ENCODE measurements at regions of chr7 and their contacts with region 1.

Region 1: GRCh38 chr7:50206453-50207250 is 97.9 kb upstream of the IKZF1 start:
- DNase-seq: no peak
- ATAC-seq: no peak
- H3K4me3 ChIP-seq: no peak overlapping the region
- H3K27ac ChIP-seq: no peak overlapping the region
- H3K4me1 ChIP-seq: no peaks in the 10 kb centered on the region
- H3K27me3 ChIP-seq: no peaks in the 10 kb centered on the region
- CTCF ChIP-seq: no peak
- EP300 ChIP-seq: no peak
- POLR2A ChIP-seq: no peak
- RAD21 ChIP-seq: no peak

Region 2: DNA sequence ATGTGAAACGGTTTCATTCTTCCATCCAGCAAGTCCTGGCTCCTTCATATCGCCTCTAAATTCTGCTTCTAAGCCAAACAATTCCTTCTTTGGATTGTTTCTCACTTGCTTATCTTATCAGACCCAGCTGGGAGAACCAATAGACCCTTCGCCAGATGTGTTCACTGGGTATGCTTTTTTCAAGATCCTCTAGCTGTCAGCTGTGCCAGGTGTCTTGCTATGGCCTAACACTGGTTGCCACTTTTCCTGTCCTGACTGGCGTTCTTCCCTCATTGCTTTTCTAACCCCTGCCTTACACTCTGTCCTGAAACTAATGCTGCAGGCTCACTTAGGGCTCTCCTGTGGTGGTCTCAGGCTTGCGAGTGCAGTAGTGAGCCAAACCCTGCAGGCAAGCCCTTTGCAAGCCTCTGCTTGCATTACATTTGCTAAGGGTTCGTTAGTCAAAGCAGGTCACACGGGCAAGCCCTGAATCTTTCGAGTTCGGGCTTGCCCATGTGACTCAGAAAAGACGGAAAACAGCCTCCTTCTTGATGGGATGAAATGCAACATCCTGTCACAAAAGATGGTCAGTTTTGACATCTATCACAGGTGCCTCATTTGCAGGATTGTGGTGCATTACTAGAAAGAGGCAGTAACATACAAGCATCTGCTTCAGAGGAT is 340.4 kb before region 1 on chr7:
- CTCF ChIA-PET with region 1: no interaction called
- POLR2A ChIA-PET with region 1: no interaction called
- RAD21 ChIA-PET with region 1: no interaction called
- SMC1A ChIA-PET with region 1: no interaction called
- in situ Hi-C with region 1: no loop called
- intact Hi-C with region 1: no loop called
- DNase-seq: no peak
- ATAC-seq: no peak
- H3K4me3 ChIP-seq: no peak overlapping the region
- H3K27ac ChIP-seq: no peak overlapping the region
- H3K4me1 ChIP-seq: no peaks in the 10 kb centered on the region
- H3K27me3 ChIP-seq: no peaks in the 10 kb centered on the region; a peak in 1 of 4 replicates
- CTCF ChIP-seq: no peak
- EP300 ChIP-seq: no peak
- POLR2A ChIP-seq: no peak
- RAD21 ChIP-seq: no peak

Region 3: DNA sequence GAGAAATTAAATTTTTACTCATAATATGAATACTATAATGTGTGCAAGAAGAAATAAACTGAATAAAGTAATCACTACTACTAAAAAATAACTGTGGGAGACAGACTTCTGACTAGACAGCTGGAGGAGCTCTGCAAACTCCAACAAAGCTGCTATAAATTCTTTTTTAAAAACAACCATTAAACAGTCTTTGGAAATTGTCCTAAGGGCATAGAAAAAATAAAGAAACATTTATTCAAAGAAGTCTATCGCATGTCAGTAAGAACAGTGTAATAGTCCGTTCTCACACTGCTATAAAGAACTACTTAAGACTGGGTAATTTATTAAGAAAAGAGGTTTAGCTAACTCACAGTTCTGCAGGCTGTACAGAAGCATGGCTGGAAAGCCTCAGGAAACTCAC is 169.6 kb before region 1 on chr7:
- CTCF ChIA-PET with region 1: no interaction called
- POLR2A ChIA-PET with region 1: no interaction called
- RAD21 ChIA-PET with region 1: no interaction called
- SMC1A ChIA-PET with region 1: no interaction called
- in situ Hi-C with region 1: no loop called
- intact Hi-C with region 1: no loop called
- DNase-seq: no peak
- ATAC-seq: no peak
- H3K4me3 ChIP-seq: no peak overlapping the region
- H3K27ac ChIP-seq: no peak overlapping the region
- H3K4me1 ChIP-seq: no peaks in the 10 kb centered on the region
- H3K27me3 ChIP-seq: no peaks in the 10 kb centered on the region
- CTCF ChIP-seq: no peak
- EP300 ChIP-seq: no peak
- POLR2A ChIP-seq: no peak
- RAD21 ChIP-seq: no peak

Region 4: DNA sequence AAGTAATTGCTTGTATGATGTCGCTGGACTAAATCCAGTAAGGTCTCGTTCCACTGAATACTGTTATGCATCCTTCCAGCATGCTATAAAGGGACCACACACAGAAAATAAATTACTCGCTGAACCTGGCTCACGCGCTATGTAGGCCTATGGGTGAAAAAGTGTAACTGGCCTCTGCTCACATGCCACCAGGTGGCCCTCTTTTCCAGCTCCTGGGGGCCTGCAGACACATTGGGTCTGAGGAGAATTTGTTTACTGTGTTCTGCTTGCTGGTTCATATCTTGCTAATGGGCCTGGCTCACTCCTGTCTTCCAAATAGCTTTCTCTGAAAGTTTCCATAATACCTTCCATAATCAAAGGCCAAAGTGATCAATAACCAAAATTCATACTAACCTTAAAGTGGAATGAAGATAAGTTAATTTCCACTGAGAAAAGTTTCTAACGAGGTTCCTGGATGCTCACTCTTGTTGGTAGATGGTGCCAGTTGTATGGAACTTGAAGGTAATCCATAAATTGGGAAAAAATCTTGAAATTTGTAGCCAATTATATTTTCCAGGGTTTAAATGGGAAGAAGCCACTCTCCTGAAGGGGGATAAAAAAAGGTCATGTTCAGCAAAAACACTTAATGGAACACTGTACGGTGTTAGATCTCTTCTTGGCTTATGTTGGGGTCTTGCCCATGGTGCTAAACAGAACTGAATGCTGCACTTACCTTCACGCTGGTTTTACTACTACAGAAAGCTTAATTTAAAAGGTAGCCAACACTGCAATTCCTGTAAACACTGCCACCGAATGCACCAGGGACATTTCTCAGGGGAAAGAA is 86.6 kb before region 1 on chr7:
- CTCF ChIA-PET with region 1: interaction called, 36 read pairs
- POLR2A ChIA-PET with region 1: no interaction called
- RAD21 ChIA-PET with region 1: interaction called, 9 read pairs
- SMC1A ChIA-PET with region 1: interaction called, 23 read pairs
- in situ Hi-C with region 1: no loop called
- intact Hi-C with region 1: no loop called
- DNase-seq: no peak
- ATAC-seq: peak; percentile 98
- H3K4me3 ChIP-seq: no peak overlapping the region
- H3K27ac ChIP-seq: no peak overlapping the region
- H3K4me1 ChIP-seq: peaks cover 4% of the 10 kb centered on the region; the same call in 1 of the 2 replicates
- H3K27me3 ChIP-seq: no peaks in the 10 kb centered on the region
- CTCF ChIP-seq: peak; percentile 68 to 70 (median 69)
- EP300 ChIP-seq: no peak
- POLR2A ChIP-seq: no peak
- RAD21 ChIP-seq: peak; percentile 77

Region 5: GRCh38 chr7:50185951-50186682 is 20.5 kb before region 1 on chr7:
- CTCF ChIA-PET with region 1: interaction called, 14 read pairs
- POLR2A ChIA-PET with region 1: no interaction called
- RAD21 ChIA-PET with region 1: interaction called, 3 read pairs
- SMC1A ChIA-PET with region 1: interaction called, 7 read pairs
- in situ Hi-C with region 1: no loop called
- intact Hi-C with region 1: no loop called
- DNase-seq: no peak
- ATAC-seq: no peak; the same call in 1 of the 3 replicates
- H3K4me3 ChIP-seq: no peak overlapping the region
- H3K27ac ChIP-seq: no peak overlapping the region
- H3K4me1 ChIP-seq: no peaks in the 10 kb centered on the region
- H3K27me3 ChIP-seq: no peaks in the 10 kb centered on the region
- CTCF ChIP-seq: no peak
- EP300 ChIP-seq: no peak
- POLR2A ChIP-seq: no peak
- RAD21 ChIP-seq: no peak

Region 6: GRCh38 chr7:50272808-50273207 is 66.2 kb after region 1 on chr7:
- CTCF ChIA-PET with region 1: interaction called, 42 read pairs
- POLR2A ChIA-PET with region 1: no interaction called
- RAD21 ChIA-PET with region 1: interaction called, 47 read pairs
- SMC1A ChIA-PET with region 1: interaction called, 238 read pairs
- in situ Hi-C with region 1: no loop called
- intact Hi-C with region 1: loop called (anchors 2 kb)
- DNase-seq: no peak
- ATAC-seq: peak; percentile 47
- H3K4me3 ChIP-seq: no peak overlapping the region
- H3K27ac ChIP-seq: no peak overlapping the region
- H3K4me1 ChIP-seq: peaks cover 76% of the 10 kb centered on the region
- H3K27me3 ChIP-seq: no peaks in the 10 kb centered on the region
- CTCF ChIP-seq: no peak
- EP300 ChIP-seq: no peak
- POLR2A ChIP-seq: no peak
- RAD21 ChIP-seq: no peak

Region 7: GRCh38 chr7:50369143-50370026 is 162.7 kb after region 1 on chr7:
- CTCF ChIA-PET with region 1: interaction called, 152 read pairs
- POLR2A ChIA-PET with region 1: interaction called, 9 read pairs
- RAD21 ChIA-PET with region 1: interaction called, 124 read pairs
- SMC1A ChIA-PET with region 1: interaction called, 274 read pairs
- in situ Hi-C with region 1: loop called (anchors 5 kb)
- intact Hi-C with region 1: loop called (anchors 1 kb)
- DNase-seq: peak; percentile 51
- ATAC-seq: peak; percentile 77
- H3K4me3 ChIP-seq: no peak overlapping the region
- H3K27ac ChIP-seq: peak overlapping the region; percentile 17; the same call in 1 of the 2 replicates
- H3K4me1 ChIP-seq: peaks cover 23% of the 10 kb centered on the region
- H3K27me3 ChIP-seq: no peaks in the 10 kb centered on the region
- CTCF ChIP-seq: peak; percentile 70 to 82 (median 81)
- EP300 ChIP-seq: no peak
- POLR2A ChIP-seq: no peak
- RAD21 ChIP-seq: peak; percentile 96

Region 8: DNA sequence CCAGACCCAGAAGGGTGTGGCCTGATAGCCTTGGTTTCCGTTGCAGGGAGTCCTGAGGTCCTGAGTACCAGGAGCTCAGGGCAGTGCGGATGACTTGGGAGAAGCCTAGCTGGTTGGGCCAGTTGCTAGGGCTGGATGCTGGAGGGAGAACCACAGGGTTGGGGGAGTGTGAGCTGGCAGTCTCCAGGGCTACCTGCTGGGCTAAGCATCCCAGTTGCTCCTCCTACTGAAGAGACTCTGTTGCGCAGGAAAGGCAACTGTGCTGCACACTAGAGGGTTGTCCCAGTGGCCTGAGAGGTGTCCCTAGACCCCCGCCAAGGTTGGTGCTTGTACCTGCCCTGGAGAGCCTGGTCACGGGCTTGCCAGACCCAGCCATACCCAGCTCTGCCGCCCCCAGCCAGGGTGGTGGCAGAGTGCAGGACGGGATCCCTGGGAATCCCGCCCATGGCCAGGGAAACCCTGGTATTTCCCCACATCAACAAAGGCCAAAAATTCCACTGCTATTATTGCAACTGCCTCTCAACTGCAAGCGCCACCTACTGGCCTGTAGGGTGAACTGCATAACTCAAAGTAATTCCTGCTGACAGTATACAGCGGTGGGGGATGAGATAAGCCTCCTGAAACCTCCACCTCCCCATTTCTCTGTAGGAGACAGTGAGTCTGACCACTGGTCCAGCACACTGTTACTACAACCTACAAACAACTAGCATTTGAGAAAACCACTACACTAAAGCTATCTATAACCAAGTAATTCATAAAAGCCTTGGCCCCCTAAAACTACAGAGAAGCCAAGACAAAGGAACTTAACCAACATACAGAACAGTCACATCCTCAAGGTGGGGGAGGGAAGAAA is 426.1 kb after region 1 on chr7:
- CTCF ChIA-PET with region 1: interaction called, 4 read pairs
- POLR2A ChIA-PET with region 1: no interaction called
- RAD21 ChIA-PET with region 1: no interaction called
- SMC1A ChIA-PET with region 1: interaction called, 3 read pairs
- in situ Hi-C with region 1: no loop called
- intact Hi-C with region 1: loop called (anchors 10 kb)
- DNase-seq: no peak
- ATAC-seq: peak; percentile 91
- H3K4me3 ChIP-seq: no peak overlapping the region
- H3K27ac ChIP-seq: no peak overlapping the region
- H3K4me1 ChIP-seq: no peaks in the 10 kb centered on the region
- H3K27me3 ChIP-seq: peaks cover 0 to 1% of the 10 kb centered on the region in 2 experiments; a peak in 3 of 4 replicates
- CTCF ChIP-seq: peak; percentile 73 to 95 (median 88)
- EP300 ChIP-seq: no peak
- POLR2A ChIP-seq: no peak
- RAD21 ChIP-seq: peak; percentile 65

Measured in GM12878 (cell line).